Sciatic nerve (tissue), 2 donors: ENCODE measurements at regions of chr1 and their contacts with region 1.

Region 1: DNA sequence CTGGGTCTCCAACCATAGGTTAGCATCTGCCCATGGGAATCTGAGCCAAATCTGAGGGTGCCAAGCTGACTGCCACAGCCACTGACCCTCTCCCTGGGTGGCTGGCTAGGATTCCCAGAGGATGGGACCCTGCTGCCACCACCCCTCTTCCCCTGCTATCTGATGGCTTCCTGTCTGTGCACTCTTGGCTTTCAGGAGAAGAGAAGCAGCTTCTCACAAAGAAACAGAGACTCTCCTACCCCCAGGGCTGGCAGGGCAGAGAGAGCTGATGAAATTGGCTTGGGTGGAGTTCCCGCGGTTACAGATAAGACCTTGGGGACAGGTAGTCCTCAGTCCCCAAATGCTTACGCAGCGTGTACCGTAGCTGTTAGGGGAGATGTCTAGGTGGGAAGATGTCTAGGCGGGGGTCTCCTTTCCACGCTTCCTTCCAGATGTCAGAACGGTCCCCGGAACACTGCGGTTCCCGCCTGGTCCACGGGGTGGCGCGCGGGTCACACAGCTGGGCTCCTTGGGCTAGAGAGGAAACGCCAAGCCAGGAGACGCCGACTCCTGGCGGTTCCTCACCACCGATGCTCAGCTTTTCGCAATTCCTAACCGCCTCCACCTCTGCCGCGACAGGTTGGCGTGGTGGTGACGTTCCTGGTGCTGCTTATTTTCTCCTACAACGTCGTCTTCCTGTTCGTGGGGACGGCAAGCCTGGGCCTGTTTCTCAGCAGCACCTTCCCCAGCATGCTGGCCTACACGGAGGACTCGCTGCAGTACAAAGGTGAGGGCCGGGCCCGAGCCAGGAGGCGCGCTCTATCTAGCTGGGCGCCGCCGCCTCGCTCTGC is 40.1 kb downstream of the ELK4 start:
- DNase-seq: peak; percentile 92
- ATAC-seq: peak; percentile 95

Region 2: GRCh38 chr1:205410581-205411298 is 181.0 kb before region 1 on chr1:
- intact Hi-C with region 1: no loop called
- DNase-seq: no peak
- ATAC-seq: no peak

Region 3: GRCh38 chr1:205658943-205659581 is 67.3 kb after region 1 on chr1:
- intact Hi-C with region 1: loop called (anchors 5 kb)
- DNase-seq: peak; percentile 90
- ATAC-seq: peak; percentile 87